Activated T-helper 2 cell treated with anti-CD3 and anti-CD28 coated beads, Interferon-gamma antibody, Interleukin-2, Interleukin-4, amounts not matched to agents 10 μg/mL and 5 μg/mL and 100 μg/mL, durations not matched to agents 14 hours and 24 hours and 36 hours (primary cell): ENCODE measurements at regions of chr10 and their contacts with region 1.

Region 1: DNA sequence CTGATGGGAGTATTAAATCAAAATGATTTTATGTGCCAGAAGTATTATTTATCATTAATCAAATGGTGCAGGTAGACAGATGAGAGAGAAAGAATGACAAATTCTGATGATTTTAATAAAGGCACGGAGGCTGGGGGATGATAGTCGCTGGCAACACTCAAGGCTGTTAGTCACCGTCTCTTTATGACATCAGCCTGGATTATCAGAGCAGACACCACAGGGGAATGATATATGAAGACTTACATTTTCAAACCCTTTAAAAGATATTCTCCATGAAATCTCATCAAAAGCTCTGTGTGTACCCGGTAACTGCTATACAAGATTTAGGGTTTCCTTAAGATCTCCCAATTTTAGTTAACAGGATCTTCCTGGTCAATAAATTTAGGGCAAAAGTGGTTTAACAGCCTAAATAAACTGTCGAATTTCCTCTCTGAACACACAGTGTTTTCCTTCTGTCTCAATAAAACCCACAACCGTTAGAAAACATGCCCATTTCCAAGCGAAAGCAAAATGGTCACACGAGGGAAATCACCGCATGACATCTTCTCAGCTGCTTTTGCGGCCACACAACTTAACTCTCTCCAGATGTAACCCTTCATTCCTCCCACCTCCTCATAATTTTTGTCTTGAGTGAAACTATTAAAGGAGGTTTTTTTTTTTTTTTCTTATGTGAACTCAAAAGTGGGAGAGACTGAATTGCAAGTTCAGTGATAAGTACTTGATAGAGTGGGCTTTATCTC is 133.2 kb upstream of the FAM171A1 start:
- DNase-seq: peak; percentile 18
- H3K4me3 Mint-ChIP-seq: peak overlapping the region; percentile 28
- H3K27ac Mint-ChIP-seq: peak overlapping the region; percentile 88
- H3K4me1 Mint-ChIP-seq: peaks cover 34% of the 10 kb centered on the region
- H3K27me3 Mint-ChIP-seq: peaks cover 14% of the 10 kb centered on the region

Region 2: DNA sequence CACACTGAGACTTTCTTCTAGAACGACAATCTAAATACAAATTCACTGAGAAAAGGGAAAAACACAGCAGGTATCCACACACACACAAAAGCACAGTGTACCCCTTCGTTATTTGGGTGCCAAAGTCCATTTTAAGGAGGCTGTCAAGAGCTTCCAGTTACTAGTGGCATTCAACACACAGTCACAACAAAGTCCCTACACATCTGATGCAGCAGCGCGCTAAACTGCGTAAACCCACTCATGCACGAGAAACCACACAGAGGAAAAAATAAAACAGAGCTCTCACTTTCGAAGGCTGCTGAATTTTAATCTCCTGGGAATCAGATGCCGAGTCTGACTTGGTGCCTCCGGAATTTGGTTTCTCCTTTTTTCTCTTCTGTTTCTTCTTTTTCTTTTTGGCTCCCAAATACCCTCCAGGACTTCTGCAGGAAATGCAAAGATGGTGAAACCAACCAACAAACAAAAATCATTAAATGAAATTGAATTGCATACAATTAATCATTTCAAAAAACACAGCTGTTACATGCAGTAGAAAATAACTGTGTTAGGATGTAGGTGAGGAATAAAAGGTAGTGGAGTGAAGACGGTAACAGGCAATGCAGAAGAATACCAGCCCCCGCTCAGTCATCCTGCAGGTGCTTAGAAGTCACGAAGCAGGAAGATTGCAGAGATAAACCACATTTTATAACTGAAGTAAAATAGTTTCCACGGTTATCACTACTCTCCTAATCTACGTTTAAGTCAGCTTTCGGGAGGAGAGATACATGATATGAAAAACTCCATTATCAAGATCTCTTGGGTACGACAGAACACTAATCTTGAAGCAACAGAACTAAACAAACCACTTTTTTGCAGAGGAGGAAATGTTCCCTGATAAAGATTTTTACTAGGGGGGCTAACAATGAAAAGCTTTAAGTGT is 362.9 kb before region 1 on chr10:
- intact Hi-C with region 1: loop called (anchors 1 kb)
- DNase-seq: peak; percentile 36
- H3K4me3 Mint-ChIP-seq: peak overlapping the region; percentile 63
- H3K27ac Mint-ChIP-seq: peak overlapping the region; percentile 90
- H3K4me1 Mint-ChIP-seq: peaks cover 45% of the 10 kb centered on the region
- H3K27me3 Mint-ChIP-seq: no peaks in the 10 kb centered on the region

Region 3: GRCh38 chr10:15440204-15440711 is 64.0 kb before region 1 on chr10:
- intact Hi-C with region 1: no loop called
- DNase-seq: no peak
- H3K4me3 Mint-ChIP-seq: no peak overlapping the region
- H3K27ac Mint-ChIP-seq: no peak overlapping the region
- H3K4me1 Mint-ChIP-seq: no peaks in the 10 kb centered on the region
- H3K27me3 Mint-ChIP-seq: peaks cover 29% of the 10 kb centered on the region

Region 4: GRCh38 chr10:15516256-15517085 is 12.2 kb after region 1 on chr10:
- intact Hi-C with region 1: loop called (anchors 1 kb)
- DNase-seq: no peak
- H3K4me3 Mint-ChIP-seq: no peak overlapping the region
- H3K27ac Mint-ChIP-seq: peak overlapping the region; percentile 18
- H3K4me1 Mint-ChIP-seq: peaks cover 14% of the 10 kb centered on the region
- H3K27me3 Mint-ChIP-seq: peaks cover 10% of the 10 kb centered on the region

Region 5: GRCh38 chr10:15802375-15802949 is 298.2 kb after region 1 on chr10:
- intact Hi-C with region 1: loop called (anchors 10 kb)
- DNase-seq: no peak
- H3K4me3 Mint-ChIP-seq: no peak overlapping the region
- H3K27ac Mint-ChIP-seq: peak overlapping the region; percentile 69
- H3K4me1 Mint-ChIP-seq: peaks cover 14% of the 10 kb centered on the region
- H3K27me3 Mint-ChIP-seq: no peaks in the 10 kb centered on the region